A549 (cell line): ENCODE measurements at regions of chr7 and their contacts with region 1.

Region 1: DNA sequence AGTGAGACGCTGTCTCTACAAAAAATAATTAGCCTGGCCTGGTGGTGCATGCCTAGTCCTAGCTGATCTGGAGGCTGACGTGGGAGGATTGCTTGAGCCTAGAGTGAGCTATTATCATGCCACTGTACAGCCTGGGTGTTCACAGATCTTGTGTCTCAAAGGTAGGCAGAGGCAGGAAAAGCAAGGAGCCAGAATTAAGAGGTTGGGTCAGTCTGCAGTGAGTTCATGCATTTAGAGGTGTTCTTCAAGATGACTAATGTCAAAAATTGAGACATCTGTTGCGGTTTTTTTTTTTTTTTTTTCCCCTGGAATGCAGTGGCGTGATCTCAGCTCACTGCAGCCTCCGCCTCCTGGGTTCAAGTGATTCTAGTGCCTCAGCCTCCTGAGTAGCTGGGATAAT is 5.4 kb downstream of the PPIA start:
- DNase-seq: no peak
- ATAC-seq: no peak
- H3K4me3 ChIP-seq: no peak overlapping the region
- H3K27ac ChIP-seq: no peak overlapping the region
- H3K4me1 ChIP-seq: peaks cover 21% of the 10 kb centered on the region
- CTCF ChIP-seq: no peak
- EP300 ChIP-seq: no peak
- POLR2A ChIP-seq: no peak
- RAD21 ChIP-seq: no peak

Region 2: DNA sequence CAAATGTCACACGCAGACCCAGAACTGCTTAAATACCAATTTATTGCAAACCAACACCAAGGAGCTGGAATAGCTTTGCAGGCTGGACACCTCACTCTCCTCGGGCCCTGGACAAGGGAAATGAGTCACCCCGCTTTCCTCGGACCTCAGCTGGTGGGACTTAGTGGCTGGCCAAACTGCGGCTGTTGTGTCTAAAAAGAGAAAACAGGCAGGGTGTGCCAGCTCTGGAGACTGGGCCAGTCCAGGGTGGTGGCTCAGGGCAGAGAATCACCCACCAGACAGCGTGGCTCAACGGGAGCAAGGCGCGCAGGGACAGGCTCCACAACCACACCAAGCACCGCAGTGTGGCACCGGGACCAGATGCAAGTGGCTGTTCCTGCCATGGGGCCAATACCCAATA is 418.3 kb before region 1 on chr7:
- CTCF ChIA-PET with region 1: no interaction called
- POLR2A ChIA-PET with region 1: no interaction called
- DNase-seq: no peak
- ATAC-seq: no peak
- H3K4me3 ChIP-seq: no peak overlapping the region
- H3K27ac ChIP-seq: no peak overlapping the region
- H3K4me1 ChIP-seq: peaks cover 11% of the 10 kb centered on the region; the same call in 2 of the 3 replicates
- CTCF ChIP-seq: no peak
- EP300 ChIP-seq: no peak
- POLR2A ChIP-seq: no peak
- RAD21 ChIP-seq: no peak

Region 3: GRCh38 chr7:44824894-44825526 is 23.1 kb after region 1 on chr7:
- CTCF ChIA-PET with region 1: interaction called, 3 read pairs
- POLR2A ChIA-PET with region 1: interaction called, 11 read pairs
- DNase-seq: no peak
- ATAC-seq: no peak; a peak in 2 of 6 replicates
- H3K4me3 ChIP-seq: no peak overlapping the region
- H3K27ac ChIP-seq: no peak overlapping the region
- H3K4me1 ChIP-seq: no peaks in the 10 kb centered on the region
- CTCF ChIP-seq: no peak
- EP300 ChIP-seq: no peak
- POLR2A ChIP-seq: no peak
- RAD21 ChIP-seq: no peak